GM13976 (cell line): ENCODE measurements at regions of chr20 and their contacts with region 1.

Region 1: DNA sequence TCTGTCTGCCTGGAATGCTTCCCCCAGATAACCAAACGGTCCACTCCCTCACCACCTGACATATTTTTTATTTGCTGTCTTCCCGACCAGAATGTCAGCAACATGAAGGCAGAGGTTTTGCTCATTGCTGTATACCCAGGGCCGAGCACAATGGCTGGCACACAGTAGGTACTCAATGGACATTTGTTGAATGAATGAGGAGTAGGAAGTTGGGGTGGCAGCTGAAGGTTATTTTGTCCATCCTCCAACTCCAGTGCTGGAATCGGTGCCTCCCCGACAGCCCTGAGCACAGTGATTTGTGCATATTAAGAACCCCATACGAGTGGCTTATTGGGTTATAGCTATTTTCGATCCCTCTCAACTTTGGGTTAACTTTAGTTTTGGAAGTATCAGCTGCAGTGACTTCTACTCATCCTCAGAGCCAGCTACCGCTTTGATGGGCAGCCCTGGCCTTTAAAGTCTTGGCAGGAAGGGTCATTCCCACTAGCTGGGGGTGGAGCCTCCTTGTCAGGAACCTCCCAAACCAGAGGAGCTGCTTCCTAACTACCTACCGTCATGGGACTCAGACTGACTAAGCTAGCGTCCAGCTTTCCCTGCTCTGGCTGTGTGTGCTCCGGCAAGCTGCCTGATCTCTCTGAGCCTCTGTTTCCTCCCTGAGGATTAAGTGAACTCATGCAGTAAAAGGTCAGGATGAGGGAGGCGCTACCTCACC is 10.2 kb downstream of the DUSP15 start:
- DNase-seq: peak; percentile 12
- CTCF ChIP-seq: no peak

Region 2: DNA sequence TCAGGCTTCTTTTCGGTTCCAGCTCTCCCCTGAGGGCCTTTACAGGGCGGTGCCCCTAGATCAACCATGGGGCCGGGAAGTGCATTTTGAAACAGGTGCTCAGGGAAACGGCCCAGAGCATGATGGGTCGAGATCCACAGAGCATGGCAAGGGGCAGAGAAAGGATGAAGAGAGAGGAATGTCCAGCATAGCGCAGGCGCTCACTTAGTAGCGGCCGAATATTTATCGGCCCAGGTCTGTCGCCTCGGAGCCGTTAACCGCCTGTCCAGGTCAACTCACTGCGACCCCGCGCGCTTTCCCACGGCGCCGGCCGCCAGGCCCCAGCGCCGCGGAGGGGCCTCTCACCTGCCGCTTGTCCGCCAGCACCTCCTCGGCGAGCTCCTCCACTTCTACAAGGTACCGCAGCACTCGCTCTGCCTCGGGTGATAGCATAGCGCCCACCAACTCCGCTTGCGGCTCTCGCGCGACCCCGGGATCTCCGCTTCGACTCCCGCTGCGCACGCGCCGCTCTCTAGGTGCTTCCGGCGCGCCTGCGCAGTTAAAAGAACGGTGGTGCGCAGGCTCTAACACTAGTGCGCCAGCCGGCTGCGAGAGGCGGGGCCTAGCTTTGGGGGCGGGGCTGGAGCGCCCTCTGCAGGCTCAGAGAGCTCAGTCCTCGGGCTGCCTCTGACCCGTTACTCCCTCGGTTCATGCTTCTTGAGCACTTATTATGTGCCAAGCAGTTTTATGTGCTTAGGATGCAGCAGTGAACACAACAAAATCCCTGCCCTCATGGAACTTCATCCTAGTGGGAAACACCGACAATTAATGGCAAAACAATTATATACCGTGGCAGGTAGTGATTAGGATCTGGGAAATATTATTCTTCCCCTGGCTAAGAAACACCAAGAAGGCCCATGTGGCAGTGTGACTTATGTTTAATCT is 91.6 kb after region 1 on chr20 and contains the start of gene PDRG1:
- in situ Hi-C with region 1: loop called (anchors 10 kb)
- DNase-seq: peak; percentile 98
- CTCF ChIP-seq: peak; percentile 86